Activated CD4-positive, alpha-beta memory T cell treated with anti-CD3 and anti-CD28 coated beads, Interleukin-2, amount 10 ng/mL, durations not matched to agents 7 days and 5 days (primary cell): ENCODE measurements at regions of chr1 and their contacts with region 1.

Region 1: GRCh38 chr1:2525920-2526823 is at the start of gene PANK4:
- DNase-seq: peak; percentile 93
- H3K4me3 Mint-ChIP-seq: peak within 1 kb of the TSS; percentile 80
- H3K27ac Mint-ChIP-seq: peak within 1 kb of the TSS; percentile 93
- H3K4me1 Mint-ChIP-seq: peaks cover 51% of the 10 kb centered on the region
- H3K27me3 Mint-ChIP-seq: peaks cover 21% of the 10 kb centered on the region
- total RNA-seq, gene PANK4: 71.7 to 72.6 TPM

Region 2: GRCh38 chr1:2391041-2391930 is 134.9 kb before region 1 on chr1 and contains the starts of genes MORN1 and RER1:
- CTCF ChIA-PET with region 1: no interaction called
- POLR2A ChIA-PET with region 1: interaction called, 11 read pairs
- DNase-seq: peak; percentile 99
- H3K4me3 Mint-ChIP-seq: peak within 1 kb of the TSS; percentile 85
- H3K27ac Mint-ChIP-seq: peak within 1 kb of the TSS; percentile 79
- H3K4me1 Mint-ChIP-seq: peaks cover 45% of the 10 kb centered on the region
- H3K27me3 Mint-ChIP-seq: no peaks in the 10 kb centered on the region
- total RNA-seq, gene MORN1: 6.2 to 6.3 TPM
- total RNA-seq, gene RER1: 151 to 160 TPM

Region 3: DNA sequence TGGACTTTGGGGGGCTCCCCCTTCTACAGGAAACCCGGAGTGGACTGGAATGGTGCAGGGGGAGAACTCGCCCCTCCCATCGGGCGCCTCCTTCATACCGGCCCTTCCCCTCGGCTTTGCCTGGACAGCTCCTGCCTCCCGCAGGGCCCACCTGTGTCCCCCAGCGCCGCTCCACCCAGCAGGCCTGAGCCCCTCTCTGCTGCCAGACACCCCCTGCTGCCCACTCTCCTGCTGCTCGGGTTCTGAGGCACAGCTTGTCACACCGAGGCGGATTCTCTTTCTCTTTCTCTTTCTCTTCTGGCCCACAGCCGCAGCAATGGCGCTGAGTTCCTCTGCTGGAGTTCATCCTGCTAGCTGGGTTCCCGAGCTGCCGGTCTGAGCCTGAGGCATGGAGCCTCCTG is 30.1 kb after region 1 on chr1 and contains the start of gene TNFRSF14:
- CTCF ChIA-PET with region 1: interaction called, 8 read pairs
- POLR2A ChIA-PET with region 1: interaction called, 34 read pairs
- DNase-seq: peak; percentile 85
- H3K4me3 Mint-ChIP-seq: peak within 1 kb of the TSS; percentile 95
- H3K27ac Mint-ChIP-seq: peak within 1 kb of the TSS; percentile 95
- H3K4me1 Mint-ChIP-seq: peaks cover 44% of the 10 kb centered on the region
- H3K27me3 Mint-ChIP-seq: no peaks in the 10 kb centered on the region
- total RNA-seq, gene TNFRSF14: 171 to 173 TPM